ENCODE measurements at regions of chr9 and their contacts with region 1.

Region 1: GRCh38 chr9:36401164-36401740 is 1.2 kb upstream of the RNF38 start:
- DNase-seq: peak in 1 of 3 donors; percentile 85
- H3K4me3 ChIP-seq: peak overlapping the region; percentile 44 to 92 (median 84)
- H3K27ac ChIP-seq: peak overlapping the region; percentile 64 to 92
- H3K4me1 ChIP-seq: peaks cover 9 to 25% (median 15%) of the 10 kb centered on the region in 4 experiments
- H3K27me3 ChIP-seq: no peaks in the 10 kb centered on the region

Region 2: DNA sequence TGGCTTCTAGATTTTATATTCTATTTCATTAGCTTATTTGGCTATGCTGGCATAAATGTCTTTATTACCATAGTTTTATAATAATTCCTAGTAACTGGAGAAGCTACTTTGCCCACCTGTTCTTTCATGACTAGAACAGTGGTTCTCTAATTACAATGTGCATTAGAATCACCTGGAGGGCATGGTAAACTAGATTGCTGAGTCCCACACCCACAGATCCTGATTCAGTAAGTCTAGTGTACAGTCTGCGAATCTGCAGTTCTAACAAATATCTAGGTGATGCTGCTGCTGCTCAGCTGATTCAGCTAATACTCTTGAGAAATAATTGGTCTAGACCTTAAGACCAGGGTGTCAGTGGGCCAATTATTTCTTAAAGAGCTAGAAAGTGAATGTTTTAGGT is 36.7 kb before region 1 on chr9:
- CTCF ChIA-PET with region 1: no interaction called
- POLR2A ChIA-PET with region 1: no interaction called
- DNase-seq: no peak
- H3K4me3 ChIP-seq: no peak overlapping the region
- H3K27ac ChIP-seq: no peak overlapping the region
- H3K4me1 ChIP-seq: no peaks in the 10 kb centered on the region
- H3K27me3 ChIP-seq: no peaks in the 10 kb centered on the region

Region 3: GRCh38 chr9:36415822-36416515 is 14.7 kb after region 1 on chr9:
- CTCF ChIA-PET with region 1: interaction called, 44 read pairs
- POLR2A ChIA-PET with region 1: no interaction called
- DNase-seq: no peak
- H3K4me3 ChIP-seq: no peak overlapping the region
- H3K27ac ChIP-seq: no peak overlapping the region
- H3K4me1 ChIP-seq: no peaks in the 10 kb centered on the region
- H3K27me3 ChIP-seq: no peaks in the 10 kb centered on the region

Measured in common myeloid progenitor, CD34-positive (primary cell).